Panc1 (cell line): ENCODE measurements at regions of chr5 and their contacts with region 1.

Region 1: GRCh38 chr5:43227655-43228054 is 35.6 kb downstream of the NIM1K start:
- DNase-seq: no peak
- ATAC-seq: no peak; the same call in 1 of the 2 replicates
- H3K4me3 ChIP-seq: no peak overlapping the region
- H3K27ac ChIP-seq: no peak overlapping the region
- H3K4me1 ChIP-seq: no peaks in the 10 kb centered on the region
- H3K27me3 ChIP-seq: no peaks in the 10 kb centered on the region
- CTCF ChIP-seq: peak; percentile 68

Region 2: GRCh38 chr5:43244823-43245565 is 17.3 kb after region 1 on chr5:
- CTCF ChIA-PET with region 1: no interaction called
- POLR2A ChIA-PET with region 1: no interaction called
- in situ Hi-C with region 1: no loop called
- intact Hi-C with region 1: no loop called
- DNase-seq: no peak
- ATAC-seq: no peak
- H3K4me3 ChIP-seq: no peak overlapping the region
- H3K27ac ChIP-seq: no peak overlapping the region
- H3K4me1 ChIP-seq: no peaks in the 10 kb centered on the region
- H3K27me3 ChIP-seq: peaks cover 2% of the 10 kb centered on the region; the same call in 1 of the 2 replicates
- CTCF ChIP-seq: no peak

Region 3: GRCh38 chr5:43294226-43294625 is 66.6 kb after region 1 on chr5:
- CTCF ChIA-PET with region 1: interaction called, 11 read pairs
- POLR2A ChIA-PET with region 1: no interaction called
- in situ Hi-C with region 1: no loop called
- intact Hi-C with region 1: no loop called
- DNase-seq: no peak
- ATAC-seq: no peak
- H3K4me3 ChIP-seq: no peak overlapping the region
- H3K27ac ChIP-seq: no peak overlapping the region
- H3K4me1 ChIP-seq: no peaks in the 10 kb centered on the region
- H3K27me3 ChIP-seq: no peaks in the 10 kb centered on the region
- CTCF ChIP-seq: no peak

Region 4: GRCh38 chr5:43305948-43306565 is 78.4 kb after region 1 on chr5:
- CTCF ChIA-PET with region 1: no interaction called
- POLR2A ChIA-PET with region 1: no interaction called
- in situ Hi-C with region 1: no loop called
- intact Hi-C with region 1: loop called (anchors 5 kb)
- DNase-seq: peak; percentile 36
- ATAC-seq: peak; percentile 87; the same call in 1 of the 2 replicates
- H3K4me3 ChIP-seq: no peak overlapping the region
- H3K27ac ChIP-seq: no peak overlapping the region
- H3K4me1 ChIP-seq: no peaks in the 10 kb centered on the region
- H3K27me3 ChIP-seq: no peaks in the 10 kb centered on the region
- CTCF ChIP-seq: peak; percentile 80

Region 5: DNA sequence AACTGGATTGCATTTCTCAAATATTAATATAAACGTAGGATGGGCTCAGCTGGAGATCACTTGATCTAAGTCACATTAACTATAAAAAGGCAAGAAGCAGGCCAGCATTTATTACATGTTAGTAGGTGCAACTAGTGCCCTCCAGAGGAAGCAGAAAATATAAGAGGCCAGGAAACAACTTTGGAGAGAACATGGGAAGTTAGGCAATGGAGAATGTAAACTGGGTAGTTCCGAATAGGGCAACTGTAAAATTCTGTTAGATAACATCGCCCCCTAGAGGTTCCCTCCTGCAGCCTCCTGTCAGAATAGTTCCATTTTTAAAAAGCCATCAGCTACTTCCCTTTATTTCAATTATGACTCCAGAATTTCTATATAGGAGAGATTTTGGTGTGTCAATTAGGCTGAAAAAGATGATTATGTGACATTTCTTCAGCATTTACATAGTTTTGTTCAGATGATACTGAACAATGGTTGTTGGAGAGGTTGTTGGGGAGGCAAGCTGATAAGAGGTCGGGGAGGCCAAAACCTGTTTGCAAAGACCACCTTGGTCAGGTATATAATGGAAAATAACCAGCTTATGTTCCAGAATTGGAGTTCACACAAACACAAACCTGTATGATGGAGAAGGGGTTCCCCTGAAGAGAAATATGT is 162.1 kb after region 1 on chr5:
- CTCF ChIA-PET with region 1: interaction called, 4 read pairs
- POLR2A ChIA-PET with region 1: no interaction called
- in situ Hi-C with region 1: no loop called
- intact Hi-C with region 1: loop called (anchors 2 kb)
- DNase-seq: peak; percentile 88
- ATAC-seq: peak; percentile 93
- H3K4me3 ChIP-seq: no peak overlapping the region
- H3K27ac ChIP-seq: no peak overlapping the region
- H3K4me1 ChIP-seq: no peaks in the 10 kb centered on the region
- H3K27me3 ChIP-seq: no peaks in the 10 kb centered on the region
- CTCF ChIP-seq: peak; percentile 87